HepG2 (cell line): ENCODE measurements at regions of chr1 and their contacts with region 1.

Region 1: GRCh38 chr1:185350027-185350442 is 33.0 kb upstream of the IVNS1ABP start:
- DNase-seq: peak; percentile 93
- ATAC-seq: peak; percentile 98
- H3K4me3 ChIP-seq: no peak overlapping the region
- H3K27ac ChIP-seq: peak overlapping the region; percentile 95
- H3K4me1 ChIP-seq: peaks cover 67% of the 10 kb centered on the region
- H3K27me3 ChIP-seq: no peaks in the 10 kb centered on the region
- CTCF ChIP-seq: no peak
- EP300 ChIP-seq: peak; percentile 46 to 69; a peak in 3 of 4 replicates
- POLR2A ChIP-seq: no peak
- RAD21 ChIP-seq: no peak

Region 2: GRCh38 chr1:185325413-185325812 is 24.6 kb before region 1 on chr1:
- CTCF ChIA-PET with region 1: no interaction called
- POLR2A ChIA-PET with region 1: no interaction called
- in situ Hi-C with region 1: no loop called
- intact Hi-C with region 1: loop called (anchors 2 kb)
- DNase-seq: peak; percentile 17
- ATAC-seq: no peak; the same call in 2 of the 3 replicates
- H3K4me3 ChIP-seq: no peak overlapping the region
- H3K27ac ChIP-seq: no peak overlapping the region
- H3K4me1 ChIP-seq: peaks cover 29% of the 10 kb centered on the region
- H3K27me3 ChIP-seq: no peaks in the 10 kb centered on the region
- CTCF ChIP-seq: no peak
- EP300 ChIP-seq: no peak
- POLR2A ChIP-seq: no peak
- RAD21 ChIP-seq: no peak